A673 (cell line): ENCODE measurements at regions of chr12 and their contacts with region 1.

Region 1: DNA sequence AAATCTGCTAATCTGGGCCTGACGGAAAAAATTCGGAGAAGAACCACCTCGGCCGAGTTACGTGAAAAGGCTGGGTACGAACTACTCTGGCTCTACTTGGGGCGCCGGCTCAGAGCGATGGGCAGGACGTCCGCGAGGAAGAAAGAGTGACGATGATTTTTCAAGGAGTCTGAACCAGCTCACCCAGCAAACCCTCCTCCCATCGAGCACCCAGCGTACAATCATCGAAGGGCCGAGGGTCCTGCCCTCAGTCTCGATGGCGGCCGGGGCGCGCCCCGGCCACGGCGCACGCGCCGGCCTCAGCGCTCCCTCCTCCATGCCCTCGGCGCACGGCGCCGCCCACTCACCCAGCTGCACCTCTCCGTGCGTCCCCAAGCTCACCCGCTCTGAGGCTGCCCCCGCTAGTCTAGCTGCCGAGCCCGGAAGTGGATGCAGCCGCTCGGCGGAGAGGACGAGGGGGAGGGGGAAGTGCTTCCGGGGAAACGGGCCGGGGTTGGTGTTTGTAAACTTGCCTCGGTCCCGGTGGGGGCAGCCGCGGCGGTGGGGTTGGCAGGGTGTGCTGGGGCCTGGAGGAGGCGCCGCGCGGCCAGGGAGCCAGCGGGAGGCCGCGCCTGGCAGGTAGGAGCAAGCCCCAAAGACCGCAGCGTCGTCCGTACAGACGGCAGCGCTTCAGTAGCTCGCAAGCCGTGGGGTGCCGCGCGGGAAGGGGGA is at the starts of genes CSAD and ZNF740:
- DNase-seq: peak; percentile 99
- H3K4me3 ChIP-seq: peak within 1 kb of the TSS; percentile 68
- H3K27ac ChIP-seq: peak within 1 kb of the TSS; percentile 93
- H3K4me1 ChIP-seq: peaks cover 29% of the 10 kb centered on the region
- H3K27me3 ChIP-seq: no peaks in the 10 kb centered on the region
- CTCF ChIP-seq: no peak
- total RNA-seq, gene CSAD: 32.3 and 37.5 TPM in 2 replicates
- total RNA-seq, gene ZNF740: 48.6 and 50.3 TPM in 2 replicates

Region 2: DNA sequence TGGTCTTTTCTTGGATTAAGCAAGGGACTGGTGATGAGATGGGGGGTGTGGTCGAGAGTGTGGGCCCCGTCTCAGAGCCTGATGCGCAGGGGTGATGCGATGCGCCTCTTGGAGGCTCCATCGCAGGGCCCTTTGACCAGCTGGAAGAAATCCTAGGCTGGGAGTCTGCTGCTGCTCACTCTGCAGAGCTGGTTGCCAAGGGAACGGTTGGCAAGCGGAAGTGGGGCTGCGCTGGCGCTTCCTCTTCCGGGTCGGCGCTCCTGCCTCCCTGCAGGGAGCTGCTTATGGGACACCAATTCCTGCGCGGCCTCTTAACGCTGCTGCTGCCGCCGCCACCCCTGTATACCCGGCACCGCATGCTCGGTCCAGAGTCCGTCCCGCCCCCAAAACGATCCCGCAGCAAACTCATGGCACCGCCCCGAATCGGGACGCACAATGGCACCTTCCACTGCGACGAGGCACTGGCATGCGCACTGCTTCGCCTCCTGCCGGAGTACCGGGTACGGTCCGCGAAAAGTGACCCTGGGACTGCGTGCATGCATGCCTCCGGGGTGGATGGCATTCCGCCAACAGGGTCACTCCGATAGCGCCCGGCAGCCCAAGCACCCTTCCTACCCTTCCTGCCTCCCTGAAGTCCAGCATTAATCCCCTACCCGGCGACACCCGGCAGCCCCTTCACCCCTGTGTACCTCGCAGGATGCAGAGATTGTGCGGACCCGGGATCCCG is 119.2 kb after region 1 on chr12 and contains the start of gene MYG1:
- CTCF ChIA-PET with region 1: no interaction called
- POLR2A ChIA-PET with region 1: interaction called, 15 read pairs
- intact Hi-C with region 1: no loop called
- DNase-seq: peak; percentile 97
- H3K4me3 ChIP-seq: peak within 1 kb of the TSS; percentile 73
- H3K27ac ChIP-seq: peak within 1 kb of the TSS; percentile 78
- H3K4me1 ChIP-seq: peaks cover 13% of the 10 kb centered on the region
- H3K27me3 ChIP-seq: no peaks in the 10 kb centered on the region
- CTCF ChIP-seq: 0 out of 2 replicates have a peak, but pooled peaks have one; percentile 24
- total RNA-seq, gene MYG1: 102 and 111 TPM in 2 replicates

Region 3: GRCh38 chr12:53659011-53659551 is 478.7 kb after region 1 on chr12:
- CTCF ChIA-PET with region 1: no interaction called
- POLR2A ChIA-PET with region 1: interaction called, 16 read pairs
- intact Hi-C with region 1: no loop called
- DNase-seq: no peak
- H3K4me3 ChIP-seq: no peak overlapping the region
- H3K27ac ChIP-seq: peak overlapping the region; percentile 46
- H3K4me1 ChIP-seq: no peaks in the 10 kb centered on the region
- H3K27me3 ChIP-seq: no peaks in the 10 kb centered on the region
- CTCF ChIP-seq: no peak